A549 (cell line): ENCODE measurements at regions of chr7 and their contacts with region 1.

Region 1: DNA sequence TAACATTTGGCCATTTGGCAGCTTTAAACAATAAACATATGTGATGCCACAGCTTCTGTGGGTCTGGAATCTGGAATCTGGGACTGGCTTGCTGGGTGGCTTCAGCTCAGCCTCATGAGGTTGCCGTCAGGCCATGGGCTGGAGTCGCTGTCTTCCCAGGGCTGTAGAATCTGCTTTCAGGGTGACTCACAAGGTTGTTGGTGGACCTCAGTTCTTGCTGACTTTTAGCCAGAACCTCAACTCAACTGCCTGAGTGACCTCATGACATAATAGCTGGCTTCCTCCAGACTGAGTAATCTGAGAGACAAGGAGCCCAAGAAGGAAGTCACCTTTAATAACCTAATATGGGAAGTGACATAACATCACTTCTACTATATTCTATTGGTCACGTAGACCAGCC is 44.6 kb upstream of the TSPAN13 start:
- DNase-seq: peak in 1 of 2 experiments; percentile 76
- ATAC-seq: peak; percentile 78 to 87
- H3K4me3 ChIP-seq: no peak overlapping the region
- H3K27ac ChIP-seq: no peak overlapping the region
- H3K4me1 ChIP-seq: peaks cover 10% of the 10 kb centered on the region
- CTCF ChIP-seq: no peak
- EP300 ChIP-seq: no peak
- POLR2A ChIP-seq: no peak
- RAD21 ChIP-seq: no peak

Region 2: GRCh38 chr7:16695621-16696237 is 13.3 kb before region 1 on chr7:
- CTCF ChIA-PET with region 1: interaction called, 13 read pairs
- POLR2A ChIA-PET with region 1: no interaction called
- DNase-seq: peak; percentile 67 to 80
- ATAC-seq: peak; percentile 91 to 94
- H3K4me3 ChIP-seq: no peak overlapping the region
- H3K27ac ChIP-seq: no peak overlapping the region
- H3K4me1 ChIP-seq: no peaks in the 10 kb centered on the region
- CTCF ChIP-seq: peak; percentile 76
- EP300 ChIP-seq: no peak
- POLR2A ChIP-seq: no peak
- RAD21 ChIP-seq: peak; percentile 78 to 80

Region 3: DNA sequence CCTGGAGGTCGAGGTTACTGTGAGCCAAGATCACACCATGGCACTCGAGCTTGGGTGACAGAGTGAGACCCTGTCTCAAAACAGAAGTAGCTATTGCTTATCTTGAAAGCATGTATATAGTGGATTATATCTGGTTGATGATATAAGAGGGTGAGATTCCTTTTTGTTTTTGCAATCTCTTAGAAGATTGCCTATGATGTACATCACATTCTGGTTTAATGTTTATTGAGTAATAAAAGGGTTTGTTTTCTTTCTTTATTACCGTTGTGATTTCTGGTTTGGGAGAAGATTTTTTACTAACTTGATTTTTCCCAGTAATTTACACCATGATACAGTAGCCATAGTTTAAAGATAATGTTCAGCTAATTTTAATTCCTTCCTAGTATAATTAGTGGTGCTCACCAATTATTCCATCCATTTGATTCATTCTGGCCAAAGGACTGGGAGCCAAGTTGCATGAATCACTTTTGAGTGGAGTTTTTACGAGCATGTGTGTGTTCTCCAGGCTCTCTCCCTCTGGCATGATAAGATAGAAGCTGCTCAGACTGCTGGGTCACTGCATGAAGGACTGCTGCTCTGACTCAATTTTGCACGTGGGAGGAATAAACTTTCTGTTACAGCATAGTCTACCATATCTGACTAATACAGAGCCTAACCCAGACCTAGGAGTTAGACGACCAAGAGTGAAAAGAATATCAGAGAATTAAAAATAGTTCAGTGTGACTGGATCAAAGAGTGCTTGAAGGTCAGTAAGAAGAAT is 31.1 kb after region 1 on chr7:
- CTCF ChIA-PET with region 1: no interaction called
- POLR2A ChIA-PET with region 1: no interaction called
- DNase-seq: peak; percentile 69 to 80
- ATAC-seq: peak; percentile 97 to 99
- H3K4me3 ChIP-seq: no peak overlapping the region
- H3K27ac ChIP-seq: peak overlapping the region; percentile 70 to 71
- H3K4me1 ChIP-seq: peaks cover 42% of the 10 kb centered on the region
- CTCF ChIP-seq: no peak
- EP300 ChIP-seq: peak in 1 of 2 experiments; percentile 29; a peak in 2 of 5 replicates
- POLR2A ChIP-seq: no peak
- RAD21 ChIP-seq: no peak

Region 4: DNA sequence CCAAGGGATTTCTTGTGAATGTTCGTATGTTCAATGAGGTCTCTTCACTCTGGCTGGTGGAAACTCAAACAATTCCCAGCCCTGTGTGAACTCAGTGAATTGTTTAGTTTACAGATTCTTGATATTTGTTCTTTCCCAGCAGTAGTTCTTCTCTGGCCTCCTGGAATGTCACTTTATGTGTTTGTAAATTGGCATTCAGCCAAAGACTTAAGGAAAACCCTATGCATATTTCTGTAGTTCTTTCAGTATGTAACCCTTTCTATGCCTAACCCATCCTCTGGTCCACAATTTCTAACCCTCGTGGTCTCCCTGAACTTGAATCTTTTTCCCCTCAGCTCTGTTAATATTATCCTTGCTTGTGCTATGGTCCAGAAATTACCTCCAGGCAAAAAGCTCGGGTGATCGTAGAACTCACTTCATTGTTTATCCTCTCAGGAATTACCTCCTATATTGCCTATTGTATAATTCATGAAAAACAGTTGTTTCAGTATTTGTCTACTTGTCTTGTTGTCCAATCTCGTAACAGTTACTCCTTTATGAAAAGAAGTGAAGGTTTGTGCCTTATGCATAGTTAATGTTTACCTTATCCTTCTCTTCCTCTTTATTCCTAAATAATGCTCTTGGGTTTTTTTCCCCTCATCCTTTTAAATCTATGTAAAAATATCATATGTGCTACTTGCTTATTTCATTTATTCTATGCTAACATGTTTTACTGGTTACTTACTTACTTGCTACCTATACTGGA is 196.5 kb after region 1 on chr7:
- CTCF ChIA-PET with region 1: no interaction called
- POLR2A ChIA-PET with region 1: no interaction called
- DNase-seq: peak in 1 of 2 experiments; percentile 93
- ATAC-seq: peak; percentile 66 to 99; a peak in 4 of 6 replicates
- H3K4me3 ChIP-seq: no peak overlapping the region
- H3K27ac ChIP-seq: peak overlapping the region; percentile 64 to 71
- H3K4me1 ChIP-seq: peaks cover 25% of the 10 kb centered on the region
- CTCF ChIP-seq: no peak
- EP300 ChIP-seq: peak; percentile 35 to 62; a peak in 3 of 5 replicates
- POLR2A ChIP-seq: no peak
- RAD21 ChIP-seq: no peak; a peak in 1 of 5 replicates